PC-3 (cell line): ENCODE measurements at regions of chr13 and their contacts with region 1.

Region 1: GRCh38 chr13:75482070-75482819 is at the start of gene TBC1D4:
- DNase-seq: peak; percentile 81
- ATAC-seq: peak; percentile 66
- H3K4me3 ChIP-seq: peak within 1 kb of the TSS; percentile 77
- H3K27ac ChIP-seq: peak within 1 kb of the TSS; percentile 78
- H3K4me1 ChIP-seq: peaks cover 46% of the 10 kb centered on the region
- H3K27me3 ChIP-seq: no peaks in the 10 kb centered on the region
- CTCF ChIP-seq: peak; percentile 85
- total RNA-seq, gene TBC1D4: 15.1 and 22.3 TPM in 2 replicates

Region 2: GRCh38 chr13:75365724-75366173 is 116.5 kb before region 1 on chr13:
- CTCF ChIA-PET with region 1: interaction called, 11 read pairs
- POLR2A ChIA-PET with region 1: no interaction called
- intact Hi-C with region 1: no loop called
- DNase-seq: peak; percentile 92
- ATAC-seq: peak; percentile 90
- H3K4me3 ChIP-seq: peak overlapping the region; percentile 42
- H3K27ac ChIP-seq: peak overlapping the region; percentile 84
- H3K4me1 ChIP-seq: peaks cover 52% of the 10 kb centered on the region
- H3K27me3 ChIP-seq: no peaks in the 10 kb centered on the region
- CTCF ChIP-seq: 0 out of 2 replicates have a peak, but pooled peaks have one; percentile 26

Region 3: GRCh38 chr13:75372517-75372916 is 109.7 kb before region 1 on chr13:
- CTCF ChIA-PET with region 1: interaction called, 8 read pairs
- POLR2A ChIA-PET with region 1: no interaction called
- intact Hi-C with region 1: loop called (anchors 1 kb)
- DNase-seq: peak; percentile 64
- ATAC-seq: peak; percentile 20
- H3K4me3 ChIP-seq: no peak overlapping the region
- H3K27ac ChIP-seq: no peak overlapping the region
- H3K4me1 ChIP-seq: peaks cover 12% of the 10 kb centered on the region
- H3K27me3 ChIP-seq: no peaks in the 10 kb centered on the region
- CTCF ChIP-seq: peak; percentile 60

Region 4: DNA sequence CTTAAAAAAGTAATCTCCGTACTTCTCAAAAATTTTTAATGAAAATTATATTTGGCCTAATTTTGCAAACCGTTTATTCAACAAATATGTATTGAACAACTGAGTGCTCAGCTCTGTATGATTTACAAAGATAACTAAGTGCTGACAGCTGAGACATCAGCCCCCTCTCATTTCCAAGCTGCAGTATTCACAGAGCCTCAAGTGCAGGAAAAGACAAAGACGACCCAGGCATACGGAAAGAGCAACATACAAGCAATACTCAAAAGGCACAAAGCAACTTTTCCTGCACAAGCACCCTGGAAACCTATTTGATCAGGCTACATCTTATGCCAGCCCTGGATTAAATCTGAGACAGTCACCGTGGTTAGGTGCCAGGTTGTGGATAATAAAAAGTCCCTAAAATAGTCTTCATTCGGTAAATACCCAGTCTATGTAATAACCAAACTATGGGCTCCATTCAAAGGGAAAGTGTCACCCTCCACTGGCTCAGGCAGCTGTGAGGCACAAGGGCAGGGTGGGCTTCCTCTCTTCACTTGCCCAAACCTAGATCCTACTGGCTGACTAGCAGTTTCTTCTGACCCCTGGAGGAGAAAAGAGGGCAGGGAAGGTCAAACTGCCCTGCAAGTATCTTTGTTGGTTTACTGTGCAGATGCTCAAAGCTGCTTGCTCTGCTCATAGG is 65.8 kb before region 1 on chr13:
- CTCF ChIA-PET with region 1: no interaction called
- POLR2A ChIA-PET with region 1: no interaction called
- intact Hi-C with region 1: loop called (anchors 2 kb)
- DNase-seq: no peak
- ATAC-seq: peak; percentile 12; the same call in 1 of the 2 replicates
- H3K4me3 ChIP-seq: no peak overlapping the region; the same call in 1 of the 2 replicates
- H3K27ac ChIP-seq: peak overlapping the region; percentile 74
- H3K4me1 ChIP-seq: peaks cover 58% of the 10 kb centered on the region
- H3K27me3 ChIP-seq: no peaks in the 10 kb centered on the region
- CTCF ChIP-seq: no peak

Region 5: GRCh38 chr13:75455962-75456361 is 26.3 kb before region 1 on chr13:
- CTCF ChIA-PET with region 1: no interaction called
- POLR2A ChIA-PET with region 1: no interaction called
- intact Hi-C with region 1: loop called (anchors 2 kb)
- DNase-seq: no peak
- ATAC-seq: peak; percentile 77
- H3K4me3 ChIP-seq: no peak overlapping the region
- H3K27ac ChIP-seq: no peak overlapping the region
- H3K4me1 ChIP-seq: peaks cover 3% of the 10 kb centered on the region; the same call in 1 of the 2 replicates
- H3K27me3 ChIP-seq: no peaks in the 10 kb centered on the region
- CTCF ChIP-seq: no peak

Region 6: DNA sequence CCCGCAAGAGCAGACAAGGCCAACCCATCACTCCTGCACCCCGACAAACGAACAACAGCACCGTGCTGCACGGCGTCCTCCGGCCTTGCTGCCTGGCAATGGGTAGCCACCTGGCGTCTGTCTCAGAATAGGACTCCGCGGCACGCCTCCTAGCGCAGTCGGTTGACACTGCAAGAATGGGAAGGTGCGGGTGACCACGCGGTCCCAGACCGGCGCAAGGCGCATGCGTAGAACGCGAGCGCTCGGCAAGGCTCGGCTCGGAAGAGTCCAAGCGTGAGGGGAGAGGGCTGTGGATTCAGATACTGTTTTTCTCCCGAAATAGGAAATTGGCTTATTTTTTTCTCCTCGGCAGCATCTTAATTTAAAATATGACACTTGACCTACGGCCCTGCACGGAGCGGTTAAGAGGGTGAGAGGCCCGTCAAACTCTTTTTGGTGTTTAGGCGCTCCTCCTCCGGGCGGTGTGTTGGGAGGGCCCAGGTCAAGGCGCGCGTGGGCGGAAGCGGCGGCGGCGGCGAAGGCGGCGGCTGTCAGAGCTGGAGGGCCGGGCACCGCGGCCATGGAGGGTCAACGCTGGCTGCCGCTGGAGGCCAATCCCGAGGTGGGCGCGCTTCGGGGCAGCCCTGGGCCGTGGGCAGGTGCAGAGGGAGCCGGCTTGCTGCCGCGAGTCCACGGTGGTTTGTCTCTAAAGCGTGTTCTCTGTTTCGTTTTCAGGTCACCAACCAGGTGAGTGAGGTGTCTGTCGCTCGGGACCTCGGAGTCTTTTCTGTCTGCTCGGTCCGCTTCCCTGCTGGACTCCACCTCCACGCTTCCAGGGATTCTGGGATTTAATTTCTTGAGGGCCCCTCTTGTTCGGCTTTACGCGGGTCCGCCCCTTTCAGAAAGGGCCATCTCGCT is 67.3 kb after region 1 on chr13 and contains the start of gene UCHL3:
- CTCF ChIA-PET with region 1: interaction called, 4 read pairs
- POLR2A ChIA-PET with region 1: no interaction called
- intact Hi-C with region 1: loop called (anchors 1 kb)
- DNase-seq: peak; percentile 96
- ATAC-seq: peak; percentile 86
- H3K4me3 ChIP-seq: peak within 1 kb of the TSS; percentile 89
- H3K27ac ChIP-seq: peak within 1 kb of the TSS; percentile 75
- H3K4me1 ChIP-seq: peaks cover 37% of the 10 kb centered on the region
- H3K27me3 ChIP-seq: no peaks in the 10 kb centered on the region
- CTCF ChIP-seq: peak; percentile 73
- total RNA-seq, gene UCHL3: 38.6 and 50.0 TPM in 2 replicates

Region 7: GRCh38 chr13:75647126-75647784 is 165.0 kb after region 1 on chr13:
- CTCF ChIA-PET with region 1: no interaction called
- POLR2A ChIA-PET with region 1: no interaction called
- intact Hi-C with region 1: no loop called
- DNase-seq: no peak
- ATAC-seq: no peak
- H3K4me3 ChIP-seq: no peak overlapping the region
- H3K27ac ChIP-seq: no peak overlapping the region
- H3K4me1 ChIP-seq: no peaks in the 10 kb centered on the region
- H3K27me3 ChIP-seq: no peaks in the 10 kb centered on the region
- CTCF ChIP-seq: no peak

Region 8: DNA sequence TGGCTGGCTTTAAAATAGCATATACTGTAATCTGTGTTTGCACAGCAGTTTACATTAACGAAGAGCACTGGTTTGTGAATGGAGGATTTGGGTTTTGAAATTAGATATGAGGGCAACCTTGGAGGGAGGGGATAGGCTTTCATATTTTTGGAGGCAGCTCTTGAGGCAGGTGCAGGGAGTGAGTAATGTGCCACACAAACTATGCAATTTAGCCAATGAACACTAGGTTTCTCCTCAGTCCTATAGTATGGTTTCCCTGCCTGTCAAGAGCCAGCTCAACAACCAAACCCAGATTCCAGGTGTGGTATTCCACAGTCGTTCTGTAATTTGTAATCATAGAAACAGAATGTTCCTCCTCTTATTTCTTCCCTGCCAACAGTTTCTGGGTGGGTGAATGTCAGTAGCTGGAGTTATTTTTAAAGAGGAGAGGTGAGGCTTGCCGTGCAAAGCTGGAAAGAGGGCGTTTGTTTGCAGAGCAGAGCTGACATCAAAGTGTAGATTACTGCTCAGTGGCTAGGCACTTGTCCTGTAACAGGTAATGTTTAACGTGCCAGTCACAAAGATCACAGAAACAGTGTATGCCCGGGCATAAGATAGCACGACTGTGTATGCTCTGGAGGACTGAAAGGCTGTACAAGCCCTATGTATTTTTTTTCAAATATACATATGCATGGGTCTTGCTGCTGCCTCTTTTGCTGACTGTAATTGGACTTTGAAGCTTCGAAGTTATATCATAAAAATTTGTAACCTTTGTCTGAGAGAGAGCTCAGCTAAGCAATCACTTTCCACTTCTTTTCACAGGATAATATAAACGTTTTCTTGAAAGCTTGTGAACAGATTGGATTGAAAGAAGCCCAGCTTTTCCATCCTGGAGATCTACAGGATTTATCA is 278.1 kb after region 1 on chr13:
- CTCF ChIA-PET with region 1: no interaction called
- POLR2A ChIA-PET with region 1: interaction called, 12 read pairs
- intact Hi-C with region 1: no loop called
- DNase-seq: peak; percentile 76
- ATAC-seq: peak; percentile 87
- H3K4me3 ChIP-seq: peak overlapping the region; percentile 67
- H3K27ac ChIP-seq: peak overlapping the region; percentile 85
- H3K4me1 ChIP-seq: peaks cover 22% of the 10 kb centered on the region
- H3K27me3 ChIP-seq: no peaks in the 10 kb centered on the region
- CTCF ChIP-seq: peak; percentile 33